GM13976 (cell line): ENCODE measurements at regions of chr3 and their contacts with region 1.

Region 1: DNA sequence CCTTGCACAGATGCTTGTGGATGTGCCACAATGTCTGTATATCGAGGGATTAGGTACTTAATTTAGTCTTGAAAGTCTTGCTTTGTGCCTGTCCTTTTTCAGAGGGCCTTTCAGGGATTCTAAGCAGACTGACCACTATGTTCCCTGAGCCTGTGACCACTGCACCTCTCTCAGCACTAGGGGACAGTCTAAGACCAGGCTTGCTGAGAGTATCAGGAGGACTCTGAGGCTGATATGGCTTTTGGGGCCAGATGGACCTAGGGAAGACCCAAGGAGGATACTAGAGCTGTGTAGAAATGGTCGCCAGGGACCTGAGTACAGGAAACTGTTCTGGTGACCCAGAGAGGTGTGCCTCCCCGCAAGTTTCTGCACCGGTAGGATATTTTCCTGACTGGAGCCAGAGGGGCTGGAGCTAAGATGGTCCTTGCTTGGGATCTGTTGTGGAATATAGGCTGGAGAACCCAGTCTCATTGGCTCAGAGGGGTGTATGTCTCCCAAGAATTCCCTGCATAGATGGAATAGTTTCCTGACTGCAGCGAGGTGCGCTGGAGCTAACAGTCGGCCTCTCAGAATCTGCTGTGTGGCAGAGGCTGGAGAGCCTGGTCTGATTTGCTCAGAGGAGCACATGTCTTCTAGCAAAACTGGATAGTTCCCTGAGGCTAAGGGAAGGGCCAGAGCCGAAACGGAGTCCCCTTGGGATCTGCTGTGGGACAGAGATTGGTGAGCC is 213.2 kb upstream of the DCBLD2 start:
- DNase-seq: no peak
- CTCF ChIP-seq: peak; percentile 54

Region 2: DNA sequence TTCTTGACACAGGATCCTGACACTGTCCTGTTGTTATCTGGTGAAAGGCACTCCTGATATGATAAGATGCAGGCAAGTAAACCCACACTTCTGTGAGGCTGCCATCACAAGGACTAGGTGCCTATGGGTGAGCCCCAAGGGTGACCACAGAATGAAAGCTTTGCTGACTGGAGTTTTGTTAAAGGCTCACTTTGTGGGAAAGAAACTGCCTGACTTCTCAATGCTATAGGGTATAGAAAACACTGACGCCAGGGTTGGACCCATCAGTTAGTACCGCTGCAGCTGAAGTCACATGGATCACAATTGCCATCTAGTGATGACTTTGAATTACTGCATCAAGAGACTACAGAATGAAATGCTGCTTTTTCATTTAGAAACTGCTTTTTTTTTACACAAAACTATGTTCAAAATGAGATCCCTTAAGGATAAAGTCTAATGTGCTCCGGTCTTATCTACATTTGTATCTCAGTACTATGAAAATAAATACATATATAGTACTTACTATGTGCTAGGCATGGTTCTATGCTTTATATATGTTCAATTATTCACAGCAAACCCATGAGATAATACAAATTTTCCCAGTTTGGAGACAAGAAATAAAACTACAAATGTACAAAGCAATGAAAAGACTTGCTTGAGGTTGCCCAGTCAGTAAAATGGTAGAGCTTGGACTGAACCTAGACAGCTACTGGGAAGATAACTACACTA is 638.7 kb after region 1 on chr3:
- in situ Hi-C with region 1: loop called (anchors 25 kb)
- DNase-seq: peak; percentile 18
- CTCF ChIP-seq: peak; percentile 50